Right cardiac atrium (tissue), 5 donors: ENCODE measurements at regions of chr5 and their contacts with region 1.

Region 1: DNA sequence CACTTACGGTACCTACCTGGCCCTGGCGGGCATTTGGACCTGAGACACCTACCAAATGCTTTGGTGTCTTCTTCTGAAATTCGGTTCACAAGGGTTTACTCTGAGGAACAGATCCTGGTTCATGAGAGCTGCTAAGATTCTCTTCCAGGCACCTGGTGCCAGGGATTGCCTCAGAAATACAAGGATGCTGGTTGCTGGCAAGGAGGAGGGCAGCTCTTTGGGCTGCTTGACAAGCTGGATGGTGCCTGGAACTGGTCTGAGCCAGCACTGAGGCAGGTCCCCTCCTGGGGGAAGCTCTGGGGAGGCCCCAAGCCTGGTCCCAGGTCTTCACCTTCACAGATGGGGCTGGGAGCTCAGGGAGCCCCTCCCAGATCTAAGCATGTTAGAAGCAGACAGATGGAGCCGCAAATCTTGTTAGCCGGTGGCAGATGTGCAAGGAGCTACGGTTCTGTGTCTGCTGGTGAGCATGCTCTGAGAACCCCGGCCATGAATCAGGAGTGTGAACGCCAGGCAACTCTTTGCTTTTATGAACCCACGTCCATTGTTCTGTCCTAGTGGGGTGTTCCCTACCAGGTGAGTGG is 16.3 kb downstream of the FABP6 start:
- DNase-seq: no peak
- ATAC-seq: no peak
- H3K4me3 ChIP-seq: no peak overlapping the region
- H3K27ac ChIP-seq: no peak overlapping the region
- H3K4me1 ChIP-seq: no peaks in the 10 kb centered on the region
- H3K27me3 ChIP-seq: no peaks in the 10 kb centered on the region

Region 2: DNA sequence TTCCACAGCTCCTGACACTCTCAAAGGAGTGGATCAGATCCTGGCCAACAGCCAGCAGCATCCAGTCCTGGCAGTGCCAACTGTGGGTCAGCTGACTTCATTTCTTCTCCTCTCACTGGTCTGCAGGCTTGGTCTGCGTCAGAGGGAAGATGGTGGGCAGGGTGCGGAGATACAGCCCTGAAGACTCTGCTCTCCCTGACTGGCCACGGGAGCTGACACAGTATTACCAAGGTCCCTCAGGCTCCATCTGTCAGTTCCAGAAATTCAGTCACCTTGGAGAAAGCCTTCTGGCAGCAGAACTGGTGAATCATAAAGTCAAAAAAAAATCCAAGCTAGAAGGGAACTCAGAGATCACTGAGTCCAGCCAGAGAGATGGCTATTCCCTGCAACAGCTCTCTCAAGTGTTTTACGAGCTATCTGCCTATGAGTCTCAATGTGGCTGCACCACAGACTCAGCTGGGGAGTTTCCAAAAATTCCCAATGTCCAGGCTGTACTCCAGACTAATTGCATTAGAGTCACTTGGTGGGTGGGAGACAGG is 96.9 kb after region 1 on chr5:
- intact Hi-C with region 1: loop called in 1 of 4 experiments (anchors 10 kb)
- DNase-seq: no peak
- ATAC-seq: peak; percentile 19 to 28
- H3K4me3 ChIP-seq: no peak overlapping the region
- H3K27ac ChIP-seq: no peak overlapping the region
- H3K4me1 ChIP-seq: peaks cover 4% of the 10 kb centered on the region
- H3K27me3 ChIP-seq: no peaks in the 10 kb centered on the region